Endothelial cell of umbilical vein (primary cell): ENCODE measurements at regions of chr2 and their contacts with region 1.

Region 1: DNA sequence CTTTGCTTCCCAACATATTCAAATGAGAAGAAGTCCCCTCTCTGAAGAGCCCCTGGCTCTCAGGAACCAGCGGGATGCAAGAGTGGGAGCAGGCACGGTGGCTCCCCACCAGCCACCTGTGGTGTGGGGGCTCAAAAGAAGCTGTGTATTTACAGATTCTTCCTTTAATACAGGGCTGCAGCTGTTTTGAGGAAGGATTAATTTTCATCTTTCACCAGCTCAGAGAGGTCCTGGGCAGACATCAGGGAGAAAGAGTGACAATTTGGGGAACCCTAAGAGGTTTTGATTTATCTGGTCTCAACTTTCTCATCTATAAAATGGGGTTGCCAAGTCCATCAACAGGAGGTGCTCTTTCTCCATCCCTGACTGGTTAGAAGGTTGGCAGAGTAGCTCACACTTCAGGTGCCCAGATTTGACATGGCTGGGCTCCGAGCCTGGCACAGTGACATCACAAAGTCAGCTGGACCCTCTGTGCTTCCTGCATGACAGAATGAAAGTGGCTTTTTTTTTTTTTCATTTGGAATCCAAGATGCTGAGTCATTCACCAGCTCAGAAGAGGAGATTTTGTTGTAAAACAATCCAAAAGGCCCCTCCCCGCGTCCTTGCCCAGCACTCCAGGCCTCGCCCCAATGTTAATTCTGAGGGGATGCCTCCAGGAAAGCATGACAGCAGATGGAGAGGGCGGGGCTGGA is 15.5 kb upstream of the SIX2 start:
- DNase-seq: peak; percentile 74
- H3K4me3 ChIP-seq: no peak overlapping the region
- H3K27ac ChIP-seq: peak overlapping the region; percentile 8
- H3K4me1 ChIP-seq: no peaks in the 10 kb centered on the region
- H3K27me3 ChIP-seq: peaks cover 2 to 6% of the 10 kb centered on the region in 2 experiments
- CTCF ChIP-seq: peak; percentile 4 to 28
- POLR2A ChIP-seq: no peak

Region 2: GRCh38 chr2:43985359-43985758 is 1039.4 kb before region 1 on chr2:
- CTCF ChIA-PET with region 1: no interaction called
- POLR2A ChIA-PET with region 1: no interaction called
- dilution Hi-C with region 1: no loop called
- intact Hi-C with region 1: no loop called
- DNase-seq: no peak
- H3K4me3 ChIP-seq: no peak overlapping the region
- H3K27ac ChIP-seq: no peak overlapping the region
- H3K4me1 ChIP-seq: no peaks in the 10 kb centered on the region
- H3K27me3 ChIP-seq: no peaks in the 10 kb centered on the region
- CTCF ChIP-seq: no peak
- POLR2A ChIP-seq: no peak

Region 3: DNA sequence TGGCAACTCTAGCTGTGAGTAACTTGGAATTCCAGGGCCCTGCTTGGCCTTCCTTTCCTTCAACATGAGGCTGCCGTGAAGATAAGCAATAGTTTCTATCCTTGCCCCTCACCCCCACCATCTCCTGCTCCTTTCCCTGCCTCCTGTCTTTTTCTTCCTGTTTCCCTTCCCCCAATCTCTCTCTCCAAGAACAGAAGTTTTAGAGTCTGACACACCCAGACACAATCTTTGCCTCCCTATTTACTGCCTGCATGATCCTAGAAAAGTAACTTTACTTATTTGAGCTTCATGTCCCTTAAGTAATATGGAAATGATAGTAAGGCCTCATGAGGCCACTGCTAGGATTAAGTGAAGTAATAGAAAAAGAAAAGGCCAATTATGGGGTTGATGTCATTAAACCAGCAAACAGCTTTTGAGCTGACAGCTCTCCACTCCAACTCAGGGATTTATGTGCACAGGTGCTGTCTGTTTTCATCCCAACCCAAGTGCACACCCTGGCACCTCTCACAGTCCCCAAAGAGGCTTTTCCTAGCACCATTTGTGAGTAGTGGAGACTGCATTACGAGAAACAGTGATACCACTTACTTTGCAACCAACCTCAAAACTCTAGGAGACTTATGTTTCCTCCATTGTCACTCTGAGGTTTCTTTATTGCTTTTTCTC is 206.9 kb before region 1 on chr2:
- CTCF ChIA-PET with region 1: no interaction called
- POLR2A ChIA-PET with region 1: no interaction called
- dilution Hi-C with region 1: no loop called
- intact Hi-C with region 1: no loop called
- DNase-seq: no peak
- H3K4me3 ChIP-seq: no peak overlapping the region
- H3K27ac ChIP-seq: no peak overlapping the region
- H3K4me1 ChIP-seq: no peaks in the 10 kb centered on the region
- H3K27me3 ChIP-seq: peaks cover 3 to 6% of the 10 kb centered on the region in 2 experiments
- CTCF ChIP-seq: no peak
- POLR2A ChIP-seq: no peak

Region 4: GRCh38 chr2:45009303-45009927 is 15.3 kb before region 1 on chr2 and contains the start of gene SIX2:
- CTCF ChIA-PET with region 1: interaction called, 18 read pairs
- POLR2A ChIA-PET with region 1: no interaction called
- dilution Hi-C with region 1: no loop called
- intact Hi-C with region 1: loop called (anchors 1 kb)
- DNase-seq: peak; percentile 97
- H3K4me3 ChIP-seq: peak within 1 kb of the TSS; percentile 15 to 48 (median 38)
- H3K27ac ChIP-seq: no peak within 1 kb of the TSS
- H3K4me1 ChIP-seq: peaks cover 26% of the 10 kb centered on the region
- H3K27me3 ChIP-seq: peaks cover 62 to 85% of the 10 kb centered on the region in 2 experiments
- CTCF ChIP-seq: no peak
- POLR2A ChIP-seq: no peak
- total RNA-seq, gene SIX2: 0.24 and 0.32 TPM in 2 replicates

Region 5: GRCh38 chr2:45422921-45423320 is 398.2 kb after region 1 on chr2:
- CTCF ChIA-PET with region 1: no interaction called
- POLR2A ChIA-PET with region 1: no interaction called
- dilution Hi-C with region 1: no loop called
- intact Hi-C with region 1: no loop called
- DNase-seq: no peak
- H3K4me3 ChIP-seq: no peak overlapping the region
- H3K27ac ChIP-seq: no peak overlapping the region
- H3K4me1 ChIP-seq: no peaks in the 10 kb centered on the region
- H3K27me3 ChIP-seq: no peaks in the 10 kb centered on the region
- CTCF ChIP-seq: no peak
- POLR2A ChIP-seq: no peak